Heart right ventricle (tissue), 16 donors: ENCODE measurements at regions of chrX and their contacts with region 1.

Region 1: DNA sequence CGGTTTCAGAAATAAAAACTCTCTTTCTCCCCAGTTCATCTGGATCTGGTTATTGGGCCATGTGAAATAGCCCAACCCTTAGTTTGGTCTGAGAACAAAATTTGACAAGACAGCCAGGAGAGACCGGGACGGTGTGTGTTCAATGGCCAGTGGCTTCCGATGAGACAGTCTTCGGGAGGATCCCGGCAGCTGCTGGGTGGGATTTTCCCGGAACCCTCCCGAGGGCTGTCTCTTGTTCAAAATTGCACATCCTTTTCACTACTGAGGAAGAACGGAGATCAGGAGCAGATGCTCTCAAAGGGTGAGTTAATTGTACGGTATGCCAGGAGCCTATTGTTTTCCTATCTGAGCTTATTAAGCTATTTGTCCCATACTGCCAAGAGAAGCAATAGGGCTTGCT is 166.5 kb downstream of the PRR32 start:
- DNase-seq: no peak
- ATAC-seq: no peak
- H3K4me3 ChIP-seq: no peak overlapping the region
- H3K27ac ChIP-seq: no peak overlapping the region
- H3K4me1 ChIP-seq: no peaks in the 10 kb centered on the region
- H3K27me3 ChIP-seq: no peaks in the 10 kb centered on the region
- CTCF ChIP-seq: no peak

Region 2: GRCh38 chrX:127030016-127030748 is 44.2 kb after region 1 on chrX:
- intact Hi-C with region 1: loop called in 1 of 10 experiments (anchors 5 kb)
- DNase-seq: no peak
- ATAC-seq: peak in 7 of 8 donors; percentile 63 to 99 (median 92)
- H3K4me3 ChIP-seq: no peak overlapping the region
- H3K27ac ChIP-seq: peak overlapping the region in 9 of 10 donors; percentile 1 to 60 (median 43)
- H3K4me1 ChIP-seq: peaks cover 0 to 7% (median 0%) of the 10 kb centered on the region in 9 donors
- H3K27me3 ChIP-seq: no peaks in the 10 kb centered on the region
- CTCF ChIP-seq: no peak